Dorsolateral prefrontal cortex (tissue), 120 donors: ENCODE measurements at regions of chr15 and their contacts with region 1.

Region 1: DNA sequence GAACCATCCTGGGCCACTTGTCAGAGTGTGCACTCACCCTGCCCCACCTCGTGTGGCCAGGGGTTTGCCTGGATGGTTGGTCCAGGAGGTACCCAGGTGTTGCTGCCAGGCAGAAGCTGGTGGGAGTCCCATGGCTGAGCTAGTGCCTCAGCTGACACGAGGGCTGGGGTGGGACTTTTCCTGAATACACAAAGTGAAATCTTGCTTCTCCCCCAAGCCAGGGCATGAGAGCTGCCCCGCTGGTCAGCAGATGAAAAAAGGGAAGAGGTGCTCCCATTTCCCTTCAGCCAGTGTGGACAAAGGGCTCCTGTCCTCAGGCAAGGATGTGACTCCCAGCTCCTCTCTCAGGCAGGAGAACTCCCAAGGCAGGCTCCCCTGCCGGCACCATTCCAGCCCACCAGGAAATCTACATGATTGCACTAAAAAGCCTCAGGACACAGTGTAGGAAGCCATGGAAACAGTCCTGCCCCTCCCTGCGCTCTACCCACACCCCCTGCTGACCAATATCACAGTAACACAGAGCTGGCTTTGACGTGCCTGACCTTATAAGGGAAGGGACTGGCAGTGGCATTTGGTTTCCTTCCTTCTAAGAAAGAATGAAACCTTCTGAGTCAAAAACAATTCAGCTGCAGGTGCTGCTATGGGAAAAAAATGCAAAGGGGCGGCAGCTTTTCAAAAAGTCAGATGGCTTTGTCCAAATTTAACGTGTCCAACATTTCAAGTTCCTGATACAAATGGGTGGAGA is 33.9 kb downstream of the MYO5C start:
- DNase-seq: peak in 6 of 10 donors; percentile 32 to 87 (median 47)
- H3K4me3 ChIP-seq: peak overlapping the region in 4 of 59 donors; percentile 4 to 9 (median 6)
- H3K27ac ChIP-seq: peak overlapping the region in 48 of 59 donors; percentile 1 to 84 (median 58)
- H3K27me3 ChIP-seq: no peaks in the 10 kb centered on the region
- CTCF ChIP-seq: peak in 7 of 56 donors; percentile 7 to 24 (median 15)

Region 2: GRCh38 chr15:52281085-52282035 is 19.7 kb after region 1 on chr15:
- intact Hi-C with region 1: no loop called
- DNase-seq: peak in 1 of 10 donors; percentile 57
- H3K4me3 ChIP-seq: no peak overlapping the region
- H3K27ac ChIP-seq: peak overlapping the region in 45 of 59 donors; percentile 0 to 92 (median 50)
- H3K27me3 ChIP-seq: peaks cover 0 to 4% (median 0%) of the 10 kb centered on the region in 45 donors
- CTCF ChIP-seq: no peak

Region 3: GRCh38 chr15:52331490-52332240 is 70.0 kb after region 1 on chr15:
- intact Hi-C with region 1: loop called (anchors 5 kb)
- DNase-seq: peak in 1 of 10 donors; percentile 41
- H3K4me3 ChIP-seq: no peak overlapping the region
- H3K27ac ChIP-seq: peak overlapping the region in 46 of 59 donors; percentile 0 to 71 (median 40)
- H3K27me3 ChIP-seq: no peaks in the 10 kb centered on the region
- CTCF ChIP-seq: peak in 54 of 56 donors; percentile 14 to 80 (median 52)

Region 4: GRCh38 chr15:52441841-52442240 is 180.2 kb after region 1 on chr15:
- intact Hi-C with region 1: no loop called
- DNase-seq: no peak
- H3K4me3 ChIP-seq: no peak overlapping the region
- H3K27ac ChIP-seq: peak overlapping the region in 48 of 59 donors; percentile 4 to 89 (median 59)
- H3K27me3 ChIP-seq: no peaks in the 10 kb centered on the region
- CTCF ChIP-seq: no peak